Prostate gland (tissue), 2 donors: ENCODE measurements at regions of chr6 and their contacts with region 1.

Region 1: DNA sequence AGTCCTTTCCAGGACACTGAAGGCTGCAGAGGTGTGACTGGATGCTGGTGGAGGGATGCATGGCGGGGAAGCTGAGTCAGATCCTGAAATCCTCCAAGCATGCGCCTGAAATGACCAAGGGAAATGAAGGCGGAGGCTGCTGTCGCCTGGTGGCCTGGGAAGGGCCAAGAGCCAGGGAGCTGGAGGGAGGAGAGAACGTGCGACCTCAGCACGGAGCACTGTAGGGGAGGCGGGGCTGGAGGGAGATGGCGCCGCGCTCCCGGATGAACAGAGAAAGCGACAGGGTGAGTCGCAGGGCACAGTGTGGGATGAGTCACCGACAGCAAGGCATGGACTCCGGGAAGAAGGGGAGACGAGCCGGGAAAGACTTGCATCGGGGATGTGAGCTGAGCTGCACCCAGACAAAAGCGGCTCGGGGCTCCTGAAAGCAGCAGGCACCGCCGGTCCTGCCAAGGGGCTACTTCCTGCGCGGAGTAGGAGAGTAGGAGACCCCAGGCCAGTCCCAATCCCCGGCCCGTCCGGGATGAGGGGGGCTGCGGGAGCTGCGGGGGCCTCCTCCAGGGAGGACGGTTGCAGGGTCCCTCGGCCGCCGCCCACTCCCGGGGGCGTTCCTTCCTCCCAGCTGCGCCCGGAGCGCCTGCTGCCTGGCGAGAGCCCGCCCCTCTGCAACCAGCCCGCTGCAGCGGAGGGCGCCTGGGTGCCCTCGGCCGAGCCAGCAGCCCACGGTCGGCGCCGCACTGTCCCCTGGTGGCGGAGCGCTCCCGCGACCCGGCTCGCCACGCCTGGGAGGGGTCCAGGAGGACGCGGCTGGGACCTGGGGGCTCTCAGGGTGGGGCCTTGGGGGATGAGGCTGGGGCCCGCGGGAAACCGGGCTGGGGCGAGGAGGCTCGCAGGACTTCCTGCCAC is 11.0 kb upstream of the NQO2 start:
- DNase-seq: peak; percentile 85
- H3K4me3 ChIP-seq: peak overlapping the region; percentile 66 to 88
- H3K27ac ChIP-seq: peak overlapping the region; percentile 91 to 97
- H3K4me1 ChIP-seq: no peaks in the 10 kb centered on the region
- H3K27me3 ChIP-seq: no peaks in the 10 kb centered on the region
- CTCF ChIP-seq: peak; percentile 85 to 95 (median 90)
- POLR2A ChIP-seq: peak; percentile 47

Region 2: DNA sequence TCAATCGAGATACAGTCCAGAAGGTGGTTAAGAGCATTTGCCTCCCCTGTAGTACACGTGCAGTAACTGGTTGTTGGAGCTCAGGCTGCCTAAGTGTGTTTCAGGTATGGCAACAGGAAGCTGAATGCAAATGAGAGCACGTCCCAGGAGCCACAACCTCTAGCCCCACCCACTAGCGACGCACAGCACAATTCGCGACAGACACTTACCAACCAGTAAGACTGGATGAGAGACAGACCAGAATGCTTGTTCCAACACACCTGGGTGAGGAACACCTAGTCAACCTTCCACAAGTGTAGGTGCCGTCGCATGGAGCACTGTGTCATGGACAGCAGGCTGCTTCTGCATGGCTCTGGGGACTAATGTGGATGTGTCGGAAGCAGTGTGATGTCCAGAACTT is 139.8 kb before region 1 on chr6:
- intact Hi-C with region 1: loop called (anchors 5 kb)
- DNase-seq: no peak
- H3K4me3 ChIP-seq: no peak overlapping the region
- H3K27ac ChIP-seq: no peak overlapping the region
- H3K4me1 ChIP-seq: no peaks in the 10 kb centered on the region
- H3K27me3 ChIP-seq: no peaks in the 10 kb centered on the region
- CTCF ChIP-seq: no peak
- POLR2A ChIP-seq: no peak